Posterior cingulate gyrus (tissue), 11 donors: ENCODE measurements at regions of chr14 and their contacts with region 1.

Region 1: DNA sequence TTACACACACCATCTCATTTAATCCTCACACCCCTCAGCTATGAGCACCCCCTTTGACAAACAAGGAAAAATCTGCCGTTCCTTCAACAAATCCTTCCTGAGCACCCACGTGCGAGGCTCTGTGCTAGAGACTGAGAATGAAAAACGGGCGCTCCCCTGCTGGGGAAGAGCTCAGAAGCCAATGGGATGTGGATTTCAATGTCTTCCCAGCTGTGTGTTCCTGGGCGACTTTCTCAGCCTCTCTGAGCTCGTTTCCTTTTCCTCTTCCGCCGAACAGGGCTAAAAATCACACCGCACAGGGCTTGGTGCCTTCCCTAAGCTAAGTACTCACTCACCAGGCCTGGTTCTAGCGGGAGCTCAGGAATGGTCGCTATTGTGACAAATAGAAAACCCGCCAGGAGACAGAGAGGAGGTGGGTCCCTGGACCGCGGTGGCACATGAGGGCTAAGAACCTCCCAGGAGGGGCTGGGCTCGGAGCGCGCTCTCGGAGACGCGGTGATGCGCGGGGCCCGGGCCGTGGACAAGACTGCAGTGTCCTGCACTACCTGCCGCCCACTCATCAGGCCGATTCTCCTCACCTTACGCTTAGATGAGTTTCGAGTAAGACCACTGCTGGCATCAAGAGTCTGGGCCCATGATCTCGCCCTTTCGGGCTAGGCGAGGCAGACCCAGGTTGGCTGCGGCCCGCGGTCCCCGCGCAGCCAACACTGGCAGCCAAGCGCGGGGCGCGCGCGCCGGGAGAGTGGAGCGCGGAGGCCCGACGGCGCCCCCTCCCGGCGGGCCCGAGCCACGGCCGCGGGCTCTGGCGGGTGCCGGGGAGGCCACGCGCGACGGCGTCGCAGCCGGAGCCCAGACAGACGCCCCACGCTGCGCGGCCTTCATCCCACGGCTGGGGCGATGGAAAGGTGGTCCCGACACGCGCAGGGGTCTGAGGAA is 17.0 kb downstream of the ZDHHC22 start:
- DNase-seq: peak; percentile 53 to 95 (median 68)

Region 2: GRCh38 chr14:77097700-77098528 is 26.7 kb before region 1 on chr14 and contains the start of gene CIPC:
- intact Hi-C with region 1: loop called (anchors 2 kb)
- DNase-seq: peak; percentile 99 to 100 (median 100)

Region 3: GRCh38 chr14:77108746-77109145 is 15.9 kb before region 1 on chr14:
- intact Hi-C with region 1: loop called (anchors 2 kb)
- DNase-seq: no peak